ENCODE measurements at regions of chr2 and their contacts with region 1.

Region 1: GRCh38 chr2:171687287-171688128 is at the start of gene DYNC1I2:
- DNase-seq: peak; percentile 90 to 97 (median 92)
- H3K4me3 ChIP-seq: peak within 1 kb of the TSS; percentile 66 to 100 (median 93)
- H3K27ac ChIP-seq: peak within 1 kb of the TSS; percentile 63 to 98 (median 91)
- H3K27me3 ChIP-seq: no peaks in the 10 kb centered on the region
- CTCF ChIP-seq: peak in 24 of 56 donors; percentile 7 to 54 (median 22)
- total RNA-seq, gene DYNC1I2: 100 to 259 (median 151) TPM

Region 2: DNA sequence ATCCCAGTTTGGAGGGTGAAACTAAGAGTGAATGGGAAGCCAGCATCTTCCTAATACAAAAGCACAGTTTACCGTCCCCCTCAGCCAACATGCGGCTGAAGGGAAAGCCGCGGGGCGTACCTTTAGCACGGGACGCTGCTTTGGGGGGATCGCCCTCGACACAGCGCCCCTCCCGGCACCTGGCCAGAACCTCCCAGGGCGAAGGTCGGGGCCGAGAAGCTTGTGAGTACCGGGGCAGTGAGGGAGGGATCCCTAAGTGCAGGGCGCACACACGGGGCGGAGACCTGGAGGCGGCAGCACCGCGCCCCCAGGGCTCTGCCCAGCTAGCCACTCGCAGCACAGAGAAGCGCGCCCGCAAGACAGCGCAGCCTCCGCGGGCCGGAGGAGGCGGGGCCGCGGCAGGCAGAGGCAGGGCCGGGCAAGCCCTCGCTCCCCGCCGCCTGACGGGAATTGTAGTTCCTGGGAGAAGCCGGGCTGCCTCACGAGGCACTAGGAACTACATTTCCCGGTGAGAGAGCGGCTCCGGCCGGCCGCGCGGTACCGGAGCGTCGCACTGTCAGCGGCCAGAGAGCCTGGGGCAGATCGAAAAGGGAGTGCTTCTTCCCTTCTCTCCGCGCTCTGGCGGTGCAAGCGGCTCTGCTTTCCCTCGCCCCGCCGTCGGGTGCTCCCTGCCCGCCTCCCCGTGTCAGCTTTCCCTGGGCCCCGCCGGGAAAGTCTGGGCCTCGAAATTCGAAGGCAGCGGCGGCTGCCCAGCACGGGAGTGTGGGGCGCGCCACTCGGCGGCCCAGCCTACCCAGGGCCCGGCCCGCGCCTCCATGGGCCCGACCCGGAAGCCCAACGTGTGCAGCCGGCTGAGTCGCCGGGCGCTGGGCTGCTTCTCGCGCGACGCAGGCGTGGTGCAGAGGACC is 253.5 kb before region 1 on chr2 and contains the starts of genes DCAF17 and METTL8:
- intact Hi-C with region 1: loop called in 1 of 2 experiments (anchors 5 kb)
- DNase-seq: peak; percentile 91 to 98 (median 96)
- H3K4me3 ChIP-seq: peak within 1 kb of the TSS; percentile 67 to 99 (median 88)
- H3K27ac ChIP-seq: peak within 1 kb of the TSS; percentile 80 to 99 (median 96)
- H3K27me3 ChIP-seq: no peaks in the 10 kb centered on the region
- CTCF ChIP-seq: peak; percentile 18 to 81 (median 62)
- total RNA-seq, gene DCAF17: 15.9 to 42.0 (median 28.0) TPM
- total RNA-seq, gene METTL8: 14.3 to 33.4 (median 21.6) TPM

Region 3: GRCh38 chr2:171522052-171522787 is 165.3 kb before region 1 on chr2 and contains the start of gene CYBRD1:
- intact Hi-C with region 1: loop called in 1 of 2 experiments (anchors 10 kb)
- DNase-seq: peak; percentile 34 to 90 (median 81)
- H3K4me3 ChIP-seq: peak within 1 kb of the TSS; percentile 57 to 92 (median 77)
- H3K27ac ChIP-seq: peak within 1 kb of the TSS; percentile 3 to 97 (median 91)
- H3K27me3 ChIP-seq: peaks cover 0 to 18% (median 0%) of the 10 kb centered on the region in 45 donors
- CTCF ChIP-seq: peak in 19 of 56 donors; percentile 2 to 48 (median 20)
- total RNA-seq, gene CYBRD1: 14.0 to 100 (median 38.9) TPM

Region 4: GRCh38 chr2:171598713-171599319 is 88.7 kb before region 1 on chr2:
- intact Hi-C with region 1: loop called in 1 of 2 experiments (anchors 5 kb)
- DNase-seq: peak in 4 of 10 donors; percentile 16 to 60 (median 31)
- H3K4me3 ChIP-seq: peak overlapping the region in 23 of 59 donors; percentile 4 to 50 (median 27)
- H3K27ac ChIP-seq: peak overlapping the region in 4 of 59 donors; percentile 6 to 50 (median 26)
- H3K27me3 ChIP-seq: no peaks in the 10 kb centered on the region
- CTCF ChIP-seq: peak; percentile 59 to 92 (median 83)

Region 5: DNA sequence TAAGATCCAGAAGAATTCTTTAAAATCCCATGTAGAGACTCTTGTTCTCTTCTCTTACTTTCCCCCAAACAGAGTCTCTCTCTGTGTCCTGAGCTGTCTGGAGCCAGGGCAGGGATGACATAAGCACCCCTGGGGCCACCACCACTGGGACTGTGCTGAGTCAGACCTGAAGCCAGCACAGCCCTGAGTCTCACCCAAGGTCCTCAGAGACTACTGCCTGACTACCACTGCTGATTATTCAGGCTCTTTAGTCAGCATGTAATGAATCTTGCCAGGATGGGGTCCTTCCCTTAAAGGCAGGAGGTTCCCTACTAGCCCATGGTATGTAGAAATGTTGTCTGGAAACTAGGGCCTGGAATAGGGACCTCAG is 35.1 kb before region 1 on chr2:
- intact Hi-C with region 1: no loop called
- DNase-seq: no peak
- H3K4me3 ChIP-seq: no peak overlapping the region
- H3K27ac ChIP-seq: no peak overlapping the region
- H3K27me3 ChIP-seq: no peaks in the 10 kb centered on the region
- CTCF ChIP-seq: no peak

Region 6: DNA sequence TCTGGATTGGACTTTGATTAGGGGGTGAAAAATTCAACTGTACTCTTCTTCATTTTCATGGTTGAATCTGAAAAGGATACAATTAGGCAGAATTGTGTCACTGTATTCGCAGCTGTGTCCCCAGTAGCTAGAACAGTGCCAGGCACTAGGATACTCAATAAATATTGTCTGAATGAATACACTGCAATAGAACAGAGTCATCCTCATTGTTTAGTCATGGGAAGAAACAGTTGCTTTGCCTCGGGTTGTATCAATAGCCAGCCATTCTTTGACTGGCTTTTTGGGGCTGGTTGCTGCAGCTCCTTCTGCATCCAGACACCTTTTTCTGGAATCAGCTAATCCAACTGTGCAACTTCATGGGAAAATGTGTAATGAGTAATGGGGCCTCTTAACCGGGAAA is 18.4 kb before region 1 on chr2:
- intact Hi-C with region 1: loop called in 1 of 2 experiments (anchors 2 kb)
- DNase-seq: peak in 3 of 10 donors; percentile 9 to 49 (median 39)
- H3K4me3 ChIP-seq: peak overlapping the region in 3 of 59 donors; percentile 2 to 31 (median 4)
- H3K27ac ChIP-seq: peak overlapping the region; percentile 50 to 98 (median 91)
- H3K27me3 ChIP-seq: peaks cover 0 to 8% (median 0%) of the 10 kb centered on the region in 45 donors
- CTCF ChIP-seq: peak in 2 of 56 donors; percentile 12 to 15

Region 7: DNA sequence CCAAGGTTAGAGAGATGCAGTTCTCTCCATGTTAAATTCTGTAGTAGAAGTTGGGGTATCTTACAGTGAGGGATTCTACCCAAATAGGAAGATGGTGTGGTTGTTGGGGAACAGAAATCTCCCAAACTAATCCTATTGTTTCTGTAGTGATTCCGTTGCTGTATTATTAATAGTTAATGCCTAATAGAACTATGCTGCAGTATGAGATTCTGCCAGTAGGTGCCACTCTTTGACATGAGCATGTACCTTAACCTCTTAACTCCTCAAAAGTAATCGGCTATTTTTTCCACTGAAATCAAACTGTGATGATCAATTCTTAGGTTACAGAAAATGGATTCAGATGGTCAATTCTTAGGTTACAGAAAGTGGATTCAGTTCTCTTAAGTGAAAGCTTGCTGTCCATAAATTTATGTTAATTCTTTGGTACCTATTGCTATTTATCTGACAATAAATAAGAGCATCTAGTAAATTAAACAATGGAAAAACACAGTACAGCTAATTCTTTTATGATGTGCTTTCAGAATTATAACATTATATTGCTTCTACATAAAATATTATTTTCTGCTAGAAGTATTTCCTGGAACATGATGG is 513.1 kb after region 1 on chr2:
- intact Hi-C with region 1: no loop called
- DNase-seq: no peak
- H3K4me3 ChIP-seq: no peak overlapping the region
- H3K27ac ChIP-seq: no peak overlapping the region
- H3K27me3 ChIP-seq: no peaks in the 10 kb centered on the region
- CTCF ChIP-seq: peak in 30 of 56 donors; percentile 10 to 48 (median 27)

Measured in dorsolateral prefrontal cortex (tissue), 120 donors.